Activated CD4-positive, alpha-beta T cell treated with anti-CD3 and anti-CD28 coated beads, Interleukin-2, amount 10 ng/mL, durations not matched to agents 24 days and 14 days (primary cell): ENCODE measurements at regions of chr15 and their contacts with region 1.

Region 1: DNA sequence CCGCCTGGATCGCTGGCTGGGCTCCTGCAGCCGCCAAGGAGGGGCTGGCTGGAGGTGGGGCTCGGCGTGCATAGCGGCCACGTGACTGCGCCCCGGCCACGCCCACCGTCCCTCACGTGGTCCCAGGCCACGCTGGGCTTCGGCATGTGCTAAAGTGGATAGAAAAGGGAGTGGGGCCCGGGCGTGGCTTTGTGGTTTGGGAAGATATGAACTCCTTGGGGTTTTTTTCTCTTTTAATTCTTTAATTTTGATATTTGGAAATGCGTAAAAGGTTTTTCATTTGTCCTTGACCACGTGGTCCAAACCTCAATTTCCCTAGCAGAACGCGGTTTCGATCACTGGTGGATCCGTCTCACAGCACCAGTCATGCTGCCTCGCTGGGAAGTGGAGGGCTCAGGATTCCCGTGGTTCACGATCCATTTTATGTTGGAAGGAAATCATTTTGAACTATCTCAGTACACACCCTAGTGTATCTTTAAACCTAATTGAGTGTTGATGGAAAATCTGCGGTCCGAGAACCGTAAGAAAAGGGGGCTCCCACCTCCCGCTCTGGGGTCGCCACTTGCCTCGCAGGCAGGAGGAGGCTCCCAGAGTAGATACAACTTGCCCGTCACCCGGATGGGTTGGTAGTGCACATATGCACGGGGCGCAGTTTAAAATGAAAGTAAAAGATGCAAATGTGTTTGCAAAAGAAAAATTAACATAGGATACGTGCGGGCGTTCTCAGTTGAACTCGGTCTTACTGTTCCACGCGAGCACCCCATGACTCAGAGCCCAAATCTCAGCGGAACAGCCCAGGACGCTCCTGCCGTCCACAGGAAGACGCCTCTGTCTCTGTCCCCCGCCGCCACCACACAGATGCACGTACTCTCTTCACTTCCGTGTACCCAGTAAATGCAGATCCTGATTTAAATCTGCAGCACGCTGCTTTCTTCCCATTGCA is 141.9 kb downstream of the PGPEP1L start:
- DNase-seq: peak; percentile 91
- H3K4me3 Mint-ChIP-seq: peak overlapping the region; percentile 87
- H3K27ac Mint-ChIP-seq: peak overlapping the region; percentile 93
- H3K4me1 Mint-ChIP-seq: peaks cover 34% of the 10 kb centered on the region
- H3K27me3 Mint-ChIP-seq: no peaks in the 10 kb centered on the region

Region 2: DNA sequence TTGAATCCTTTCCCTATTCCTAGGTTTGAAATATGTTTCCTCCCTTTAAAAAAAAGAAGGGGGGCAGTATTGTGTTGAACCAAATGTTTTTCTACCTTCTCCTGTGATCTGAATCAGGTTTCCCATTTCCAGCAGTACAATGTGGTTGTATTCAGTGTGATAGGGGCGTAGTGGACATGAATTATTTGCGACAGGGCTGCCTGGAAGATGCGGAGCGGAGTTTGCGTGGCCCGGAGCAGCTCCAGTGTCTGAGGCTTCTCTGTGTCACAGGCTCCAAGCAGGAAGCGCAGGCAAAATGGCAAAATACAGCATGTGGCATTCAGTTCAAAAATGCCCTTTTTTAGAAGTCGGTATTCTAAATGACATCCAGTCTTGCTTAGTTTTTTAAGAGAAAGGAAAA is 12.5 kb before region 1 on chr15:
- intact Hi-C with region 1: loop called (anchors 1 kb)
- DNase-seq: peak; percentile 94
- H3K4me3 Mint-ChIP-seq: peak overlapping the region; percentile 93
- H3K27ac Mint-ChIP-seq: peak overlapping the region; percentile 96
- H3K4me1 Mint-ChIP-seq: peaks cover 44% of the 10 kb centered on the region
- H3K27me3 Mint-ChIP-seq: no peaks in the 10 kb centered on the region

Region 3: GRCh38 chr15:98904544-98904943 is 38.9 kb after region 1 on chr15:
- intact Hi-C with region 1: no loop called
- DNase-seq: no peak
- H3K4me3 Mint-ChIP-seq: no peak overlapping the region
- H3K27ac Mint-ChIP-seq: no peak overlapping the region
- H3K4me1 Mint-ChIP-seq: peaks cover 14% of the 10 kb centered on the region
- H3K27me3 Mint-ChIP-seq: no peaks in the 10 kb centered on the region